CD4-positive, alpha-beta T cell (primary cell): ENCODE measurements at regions of chr1 and their contacts with region 1.

Region 1: DNA sequence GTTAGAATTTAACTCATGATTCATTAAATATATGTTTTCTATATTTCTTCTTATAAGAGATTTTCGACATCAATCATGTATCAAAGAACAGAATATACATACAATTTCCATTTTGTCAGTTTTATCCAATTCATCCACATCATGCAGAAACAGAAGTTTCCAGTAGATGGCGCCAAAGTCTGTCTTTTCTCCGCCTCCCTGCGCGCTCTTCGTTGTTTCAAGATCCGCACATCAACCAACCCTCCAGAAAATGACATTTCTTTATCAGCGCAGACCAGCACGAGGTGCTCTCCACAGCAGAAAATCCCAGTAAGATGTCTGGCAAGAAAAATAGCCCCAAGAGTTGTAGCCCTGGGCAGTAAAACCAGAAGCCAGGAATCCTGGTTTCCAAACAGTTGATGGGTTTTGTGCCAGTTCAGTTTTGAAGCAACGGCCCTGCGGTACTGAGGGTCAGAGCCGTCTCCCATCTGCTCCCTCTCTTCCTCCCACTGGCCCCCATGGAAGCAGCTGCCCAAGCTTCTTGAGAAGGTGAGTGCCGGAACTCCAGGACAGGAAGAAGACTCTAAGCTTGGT is 38.6 kb upstream of the GPR137B start:
- DNase-seq: peak; percentile 29 to 83 (median 51)
- ATAC-seq: peak; percentile 70
- H3K4me3 ChIP-seq: no peak overlapping the region
- H3K4me3 Mint-ChIP-seq: no peak overlapping the region
- H3K27ac ChIP-seq: no peak overlapping the region
- H3K27ac Mint-ChIP-seq: no peak overlapping the region
- H3K4me1 ChIP-seq: peaks cover 4% of the 10 kb centered on the region
- H3K4me1 Mint-ChIP-seq: peaks cover 5% of the 10 kb centered on the region
- H3K27me3 ChIP-seq: no peaks in the 10 kb centered on the region
- H3K27me3 Mint-ChIP-seq: peaks cover 5% of the 10 kb centered on the region
- CTCF ChIP-seq: peak; percentile 83

Region 2: DNA sequence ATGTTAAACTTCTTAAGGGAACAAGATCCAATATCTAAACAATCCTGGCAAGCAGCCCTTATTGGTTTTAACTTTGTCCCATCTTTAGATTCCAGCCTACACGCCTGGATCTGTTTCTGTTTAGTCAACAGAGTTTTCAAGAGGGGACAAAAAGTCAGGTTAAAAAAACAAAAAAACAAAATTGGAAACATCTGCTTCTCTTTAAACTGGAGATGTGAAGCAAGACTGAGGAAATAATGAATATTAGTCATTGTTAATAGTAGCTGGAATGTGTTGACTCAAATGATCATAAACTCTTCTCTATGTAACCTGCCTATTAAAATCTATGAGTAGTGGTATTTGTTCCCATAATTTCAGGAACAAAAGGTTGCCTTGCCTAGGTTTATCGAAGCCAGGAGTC is 93.9 kb before region 1 on chr1:
- CTCF ChIA-PET with region 1: no interaction called
- POLR2A ChIA-PET with region 1: no interaction called
- intact Hi-C with region 1: loop called in 1 of 2 experiments (anchors 10 kb)
- DNase-seq: no peak
- ATAC-seq: no peak
- H3K4me3 ChIP-seq: no peak overlapping the region
- H3K4me3 Mint-ChIP-seq: no peak overlapping the region
- H3K27ac ChIP-seq: no peak overlapping the region
- H3K27ac Mint-ChIP-seq: no peak overlapping the region
- H3K4me1 ChIP-seq: no peaks in the 10 kb centered on the region
- H3K4me1 Mint-ChIP-seq: no peaks in the 10 kb centered on the region
- H3K27me3 ChIP-seq: no peaks in the 10 kb centered on the region
- H3K27me3 Mint-ChIP-seq: no peaks in the 10 kb centered on the region
- CTCF ChIP-seq: no peak

Region 3: DNA sequence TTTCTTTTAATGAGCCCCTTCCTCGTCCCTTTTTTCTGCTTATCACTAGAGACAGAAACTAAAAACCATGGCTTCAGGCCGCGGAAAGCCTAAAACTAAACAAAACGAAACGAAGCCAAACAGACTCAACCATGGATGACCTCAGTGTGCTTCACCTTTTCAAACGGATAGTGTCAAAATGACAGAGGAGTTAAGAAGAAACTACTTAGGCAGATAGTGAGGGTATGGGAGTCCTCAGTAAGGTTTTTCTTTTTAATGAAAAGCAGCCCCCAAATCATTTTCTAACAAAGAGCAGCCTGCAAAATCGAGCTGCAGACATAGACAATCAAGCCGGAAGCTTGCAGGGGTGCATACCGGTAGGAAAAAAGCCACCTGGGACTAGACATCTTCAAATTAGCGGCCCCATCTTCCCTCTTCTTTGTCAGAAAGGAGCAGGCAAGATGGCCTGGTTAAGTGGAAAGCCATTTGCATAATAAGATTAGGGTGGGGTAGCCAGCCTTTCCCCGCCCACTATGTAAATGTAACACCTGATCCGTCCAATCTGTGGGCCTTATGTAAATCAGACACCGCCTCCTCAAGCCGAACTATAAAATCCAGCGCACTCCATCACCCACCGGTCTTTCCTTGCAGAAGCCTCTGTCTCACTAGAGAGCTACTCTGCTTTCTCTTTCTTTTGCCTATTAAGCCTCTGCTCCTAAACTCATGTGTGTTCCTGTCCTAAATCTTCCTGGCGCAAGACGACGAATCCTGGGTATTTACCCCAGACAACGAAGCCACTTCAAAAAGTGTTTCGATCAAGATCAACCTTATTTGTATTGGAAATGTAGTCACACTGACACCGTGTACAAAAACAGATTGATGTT is 184.3 kb after region 1 on chr1:
- CTCF ChIA-PET with region 1: no interaction called
- POLR2A ChIA-PET with region 1: no interaction called
- intact Hi-C with region 1: loop called (anchors 5 to 10 kb)
- DNase-seq: no peak
- ATAC-seq: no peak
- H3K4me3 ChIP-seq: no peak overlapping the region
- H3K4me3 Mint-ChIP-seq: no peak overlapping the region
- H3K27ac ChIP-seq: no peak overlapping the region
- H3K27ac Mint-ChIP-seq: no peak overlapping the region
- H3K4me1 ChIP-seq: peaks cover 9% of the 10 kb centered on the region
- H3K4me1 Mint-ChIP-seq: peaks cover 27% of the 10 kb centered on the region
- H3K27me3 ChIP-seq: no peaks in the 10 kb centered on the region
- H3K27me3 Mint-ChIP-seq: no peaks in the 10 kb centered on the region
- CTCF ChIP-seq: no peak

Region 4: DNA sequence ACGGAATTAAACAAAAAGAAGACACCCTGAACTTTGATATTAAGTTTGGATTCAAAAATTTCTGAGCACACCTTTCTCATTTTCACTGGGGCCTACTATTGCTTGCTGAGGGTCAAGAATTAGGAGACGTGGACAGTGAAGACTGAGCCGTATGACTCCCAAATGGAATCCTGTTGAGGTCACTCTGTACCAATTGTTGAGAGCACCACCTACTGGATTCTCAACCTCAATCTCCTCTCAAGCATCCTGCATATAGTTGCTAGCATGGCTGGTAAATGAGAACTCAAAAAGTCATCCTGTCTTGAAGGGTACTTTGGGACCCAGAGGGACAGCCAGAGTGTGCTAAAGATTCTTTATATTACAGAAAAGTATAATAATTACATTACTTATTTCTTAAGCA is 671.2 kb after region 1 on chr1:
- CTCF ChIA-PET with region 1: no interaction called
- POLR2A ChIA-PET with region 1: no interaction called
- intact Hi-C with region 1: loop called in 1 of 2 experiments (anchors 10 kb)
- DNase-seq: no peak
- ATAC-seq: no peak
- H3K4me3 ChIP-seq: no peak overlapping the region
- H3K4me3 Mint-ChIP-seq: no peak overlapping the region
- H3K27ac ChIP-seq: no peak overlapping the region
- H3K27ac Mint-ChIP-seq: no peak overlapping the region
- H3K4me1 ChIP-seq: no peaks in the 10 kb centered on the region
- H3K4me1 Mint-ChIP-seq: no peaks in the 10 kb centered on the region
- H3K27me3 ChIP-seq: peaks cover 3 to 14% of the 10 kb centered on the region in 2 experiments
- H3K27me3 Mint-ChIP-seq: peaks cover 49% of the 10 kb centered on the region
- CTCF ChIP-seq: no peak

Region 5: GRCh38 chr1:237386362-237387143 is 1282.8 kb after region 1 on chr1:
- CTCF ChIA-PET with region 1: no interaction called
- POLR2A ChIA-PET with region 1: no interaction called
- intact Hi-C with region 1: loop called in 1 of 2 experiments (anchors 5 kb)
- DNase-seq: peak in 3 of 14 experiments; percentile 4 to 8 (median 6)
- ATAC-seq: no peak
- H3K4me3 ChIP-seq: no peak overlapping the region
- H3K4me3 Mint-ChIP-seq: no peak overlapping the region
- H3K27ac ChIP-seq: no peak overlapping the region
- H3K27ac Mint-ChIP-seq: no peak overlapping the region
- H3K4me1 ChIP-seq: no peaks in the 10 kb centered on the region
- H3K4me1 Mint-ChIP-seq: no peaks in the 10 kb centered on the region
- H3K27me3 ChIP-seq: no peaks in the 10 kb centered on the region
- H3K27me3 Mint-ChIP-seq: no peaks in the 10 kb centered on the region
- CTCF ChIP-seq: peak; percentile 35

Region 6: DNA sequence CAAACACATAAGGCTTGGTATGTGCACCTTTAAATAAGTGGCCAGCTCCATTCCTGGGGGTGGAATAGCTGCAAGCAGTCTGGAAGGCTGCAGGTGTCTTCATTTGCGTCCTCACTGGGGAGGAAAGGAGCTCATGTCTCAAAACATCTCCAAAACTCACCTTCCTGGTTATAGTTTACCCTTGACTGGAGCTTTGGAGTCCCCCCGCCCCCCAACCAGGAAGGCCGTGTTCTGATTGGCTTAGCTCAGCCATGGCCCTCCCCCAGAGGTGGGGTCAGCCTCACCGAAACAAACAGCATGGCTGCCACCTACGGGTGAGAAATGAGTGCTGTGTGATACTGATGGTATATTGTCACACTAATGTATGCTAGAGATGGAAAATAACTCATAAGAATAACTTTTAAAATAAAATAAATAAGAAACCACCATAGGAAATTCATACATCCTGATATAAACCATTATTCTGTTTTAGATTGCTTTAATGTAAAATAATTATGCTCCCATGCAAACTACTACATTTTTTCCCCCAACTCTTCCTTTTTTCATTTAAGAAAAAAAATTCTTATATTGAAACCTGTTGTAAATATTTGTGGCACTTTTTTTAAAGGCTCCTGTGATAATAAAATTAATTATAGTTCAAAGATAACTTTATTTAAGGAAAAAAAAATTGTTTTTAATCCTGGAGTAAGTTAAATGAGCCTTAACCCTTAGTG is 1696.2 kb after region 1 on chr1:
- CTCF ChIA-PET with region 1: no interaction called
- POLR2A ChIA-PET with region 1: no interaction called
- intact Hi-C with region 1: loop called in 1 of 2 experiments (anchors 5 kb)
- DNase-seq: peak in 4 of 14 experiments; percentile 9 to 63 (median 56)
- ATAC-seq: no peak
- H3K4me3 ChIP-seq: no peak overlapping the region
- H3K4me3 Mint-ChIP-seq: no peak overlapping the region
- H3K27ac ChIP-seq: no peak overlapping the region
- H3K27ac Mint-ChIP-seq: no peak overlapping the region
- H3K4me1 ChIP-seq: no peaks in the 10 kb centered on the region
- H3K4me1 Mint-ChIP-seq: no peaks in the 10 kb centered on the region
- H3K27me3 ChIP-seq: no peaks in the 10 kb centered on the region
- H3K27me3 Mint-ChIP-seq: no peaks in the 10 kb centered on the region
- CTCF ChIP-seq: no peak